Activated CD4-positive, alpha-beta T cell treated with anti-CD3 and anti-CD28 coated beads, Interleukin-2, amount 10 ng/mL, durations not matched to agents 24 days and 14 days (primary cell): ENCODE measurements at regions of chr14 and their contacts with region 1.

Region 1: GRCh38 chr14:24188251-24189058 is at the start of gene IPO4:
- DNase-seq: peak; percentile 98
- H3K4me3 Mint-ChIP-seq: peak within 1 kb of the TSS; percentile 92
- H3K27ac Mint-ChIP-seq: peak within 1 kb of the TSS; percentile 93
- H3K4me1 Mint-ChIP-seq: peaks cover 33% of the 10 kb centered on the region
- H3K27me3 Mint-ChIP-seq: no peaks in the 10 kb centered on the region
- total RNA-seq, gene IPO4: 107 and 112 TPM in 2 replicates

Region 2: DNA sequence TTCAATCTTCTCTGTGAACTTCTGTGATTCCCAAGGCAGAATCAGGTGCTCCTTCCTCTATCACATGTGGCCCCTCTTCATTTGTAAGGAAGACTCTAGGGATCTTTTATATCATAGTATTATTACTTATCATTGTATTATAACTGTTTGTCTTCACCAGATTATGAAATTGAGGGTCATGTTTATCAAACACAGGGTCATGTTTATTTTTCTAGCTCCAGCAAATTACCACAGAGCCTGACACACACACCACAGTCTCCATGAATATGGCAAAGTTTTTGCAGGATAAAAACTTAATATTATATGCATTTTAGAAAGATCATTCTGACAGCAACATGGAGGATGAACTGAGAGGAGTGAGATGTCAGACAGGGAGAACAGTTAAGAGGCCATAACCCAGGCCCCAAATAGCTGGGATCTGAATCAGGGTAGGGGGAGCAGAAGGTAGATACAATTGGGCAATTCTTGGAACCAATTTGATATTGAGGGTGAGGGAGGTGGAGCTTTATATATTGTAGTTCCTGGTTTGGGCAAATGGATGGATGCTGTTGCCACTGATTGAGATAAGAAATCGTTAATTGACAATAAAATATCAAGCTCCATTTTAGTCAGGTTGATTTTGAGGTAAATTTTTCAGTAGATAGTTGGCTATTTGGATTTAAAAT is 421.6 kb before region 1 on chr14:
- intact Hi-C with region 1: no loop called
- DNase-seq: no peak
- H3K4me3 Mint-ChIP-seq: no peak overlapping the region
- H3K27ac Mint-ChIP-seq: no peak overlapping the region
- H3K4me1 Mint-ChIP-seq: no peaks in the 10 kb centered on the region
- H3K27me3 Mint-ChIP-seq: peaks cover 5% of the 10 kb centered on the region

Region 3: GRCh38 chr14:24146978-24147760 is 41.3 kb before region 1 on chr14 and contains the start of gene RNF31:
- intact Hi-C with region 1: loop called (anchors 2 kb)
- DNase-seq: peak; percentile 99
- H3K4me3 Mint-ChIP-seq: peak within 1 kb of the TSS; percentile 97
- H3K27ac Mint-ChIP-seq: peak within 1 kb of the TSS; percentile 99
- H3K4me1 Mint-ChIP-seq: peaks cover 59% of the 10 kb centered on the region
- H3K27me3 Mint-ChIP-seq: no peaks in the 10 kb centered on the region
- total RNA-seq, gene RNF31: 95.1 and 95.6 TPM in 2 replicates

Region 4: DNA sequence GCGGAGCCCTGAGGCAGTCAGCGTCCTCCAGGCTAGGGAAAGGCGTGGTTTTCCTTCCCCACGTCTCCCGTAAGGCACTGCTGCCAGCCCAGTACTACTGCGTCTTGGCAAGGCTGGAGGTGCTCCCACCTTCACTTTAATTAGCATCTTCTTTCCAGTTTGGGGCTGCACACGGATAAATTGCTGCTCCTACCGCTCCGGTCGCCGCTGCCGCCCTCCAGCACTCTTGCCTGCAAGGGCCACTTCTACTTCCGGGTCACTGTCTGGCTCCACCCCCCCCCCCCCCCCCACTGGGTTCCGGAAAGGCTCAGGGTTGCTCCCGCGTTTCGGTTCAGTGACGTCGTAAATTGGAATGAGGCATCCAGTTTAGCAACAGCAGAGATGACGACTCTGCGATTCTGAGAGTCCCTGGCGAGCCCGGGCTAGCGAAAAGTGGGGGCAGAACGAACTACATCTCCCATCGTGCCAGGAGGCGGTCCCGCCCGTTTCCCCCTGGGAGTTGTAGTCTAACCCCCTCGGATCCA is 43.7 kb after region 1 on chr14 and contains the start of gene NEDD8:
- intact Hi-C with region 1: loop called (anchors 1 kb)
- DNase-seq: peak; percentile 96
- H3K4me3 Mint-ChIP-seq: peak within 1 kb of the TSS; percentile 92
- H3K27ac Mint-ChIP-seq: peak within 1 kb of the TSS; percentile 92
- H3K4me1 Mint-ChIP-seq: peaks cover 41% of the 10 kb centered on the region
- H3K27me3 Mint-ChIP-seq: no peaks in the 10 kb centered on the region
- total RNA-seq, gene NEDD8: 188 and 190 TPM in 2 replicates